ENCODE measurements at regions of chr11 and their contacts with region 1.

Region 1: GRCh38 chr11:121655537-121656327 is 203.0 kb upstream of the SORL1-AS1 start:
- DNase-seq: peak; percentile 86 to 88
- ATAC-seq: peak; percentile 95 to 98 (median 96)
- H3K4me3 ChIP-seq: peak overlapping the region in 9 of 10 donors; percentile 22 to 60 (median 50)
- H3K27ac ChIP-seq: peak overlapping the region; percentile 82 to 96 (median 91)
- H3K4me1 ChIP-seq: peaks cover 0 to 28% (median 20%) of the 10 kb centered on the region in 9 donors
- H3K27me3 ChIP-seq: peaks cover 0 to 8% (median 0%) of the 10 kb centered on the region in 7 donors
- CTCF ChIP-seq: peak; percentile 77 to 91 (median 81)

Region 2: GRCh38 chr11:120151536-120151935 is 1504.2 kb before region 1 on chr11:
- intact Hi-C with region 1: no loop called
- DNase-seq: no peak
- ATAC-seq: no peak
- H3K4me3 ChIP-seq: no peak overlapping the region
- H3K27ac ChIP-seq: no peak overlapping the region
- H3K4me1 ChIP-seq: no peaks in the 10 kb centered on the region
- H3K27me3 ChIP-seq: peaks cover 0 to 60% (median 25%) of the 10 kb centered on the region in 7 donors
- CTCF ChIP-seq: no peak

Region 3: GRCh38 chr11:121722431-121723245 is 66.9 kb after region 1 on chr11:
- intact Hi-C with region 1: loop called in 2 of 10 experiments (anchors 5 kb)
- DNase-seq: peak; percentile 73 to 80
- ATAC-seq: peak; percentile 94 to 98 (median 97)
- H3K4me3 ChIP-seq: peak overlapping the region; percentile 16 to 61 (median 51)
- H3K27ac ChIP-seq: peak overlapping the region; percentile 30 to 90 (median 84)
- H3K4me1 ChIP-seq: peaks cover 0 to 22% (median 16%) of the 10 kb centered on the region in 9 donors
- H3K27me3 ChIP-seq: peaks cover 0 to 24% (median 0%) of the 10 kb centered on the region in 7 donors
- CTCF ChIP-seq: peak in 2 of 9 donors; percentile 30 to 33

Region 4: DNA sequence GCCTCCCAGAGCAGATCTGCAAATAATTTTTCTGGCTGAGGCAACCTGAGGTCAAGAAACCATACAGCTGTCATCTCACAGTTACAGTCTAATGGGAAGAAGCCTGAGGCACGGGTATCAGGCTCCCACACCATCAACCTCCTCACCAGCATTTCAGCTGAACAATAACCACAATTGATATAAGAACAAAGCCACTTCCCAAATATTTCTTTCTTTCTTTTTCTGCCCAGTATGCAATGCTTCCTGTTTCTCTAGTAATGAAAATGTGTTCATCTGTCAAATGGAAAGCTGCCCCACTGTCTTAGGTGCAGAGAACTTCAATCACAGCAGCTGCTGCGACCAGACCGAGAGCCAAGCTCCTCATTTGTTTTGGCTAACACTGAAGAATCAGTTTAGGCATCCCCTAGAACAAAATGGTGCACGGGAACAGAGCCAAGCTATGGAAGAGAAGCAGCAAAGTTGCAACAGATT is 351.9 kb after region 1 on chr11:
- intact Hi-C with region 1: loop called in 2 of 10 experiments (anchors 5 to 10 kb)
- DNase-seq: peak in 1 of 2 donors; percentile 44
- ATAC-seq: peak in 4 of 8 donors; percentile 25 to 72 (median 58)
- H3K4me3 ChIP-seq: no peak overlapping the region
- H3K27ac ChIP-seq: peak overlapping the region in 1 of 10 donors; percentile 37
- H3K4me1 ChIP-seq: peaks cover 0 to 13% (median 0%) of the 10 kb centered on the region in 9 donors
- H3K27me3 ChIP-seq: no peaks in the 10 kb centered on the region
- CTCF ChIP-seq: no peak

Region 5: DNA sequence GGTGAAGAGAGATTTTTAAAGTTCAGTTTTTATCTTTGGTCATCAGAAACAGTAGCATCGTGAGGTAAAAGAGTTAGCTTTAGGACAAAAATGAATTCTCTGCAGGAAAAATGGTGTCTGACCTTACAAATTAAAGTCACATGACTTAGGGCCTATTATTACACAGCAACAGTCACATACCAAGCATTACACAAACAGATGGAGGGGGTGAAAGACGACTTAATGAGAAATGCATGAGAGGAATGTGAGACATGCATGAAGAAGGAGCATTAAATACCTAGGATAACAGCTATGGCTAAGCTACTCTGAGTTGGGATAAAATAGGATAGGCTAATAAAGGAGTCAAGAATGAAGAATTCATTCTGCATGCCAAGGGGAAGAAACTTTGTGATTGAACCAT is 382.8 kb after region 1 on chr11:
- intact Hi-C with region 1: loop called in 1 of 10 experiments (anchors 10 kb)
- DNase-seq: no peak
- ATAC-seq: peak in 1 of 8 donors; percentile 48
- H3K4me3 ChIP-seq: no peak overlapping the region
- H3K27ac ChIP-seq: peak overlapping the region in 2 of 10 donors; percentile 9 to 35
- H3K4me1 ChIP-seq: peaks cover 0 to 22% (median 7%) of the 10 kb centered on the region in 9 donors
- H3K27me3 ChIP-seq: no peaks in the 10 kb centered on the region
- CTCF ChIP-seq: no peak

Region 6: DNA sequence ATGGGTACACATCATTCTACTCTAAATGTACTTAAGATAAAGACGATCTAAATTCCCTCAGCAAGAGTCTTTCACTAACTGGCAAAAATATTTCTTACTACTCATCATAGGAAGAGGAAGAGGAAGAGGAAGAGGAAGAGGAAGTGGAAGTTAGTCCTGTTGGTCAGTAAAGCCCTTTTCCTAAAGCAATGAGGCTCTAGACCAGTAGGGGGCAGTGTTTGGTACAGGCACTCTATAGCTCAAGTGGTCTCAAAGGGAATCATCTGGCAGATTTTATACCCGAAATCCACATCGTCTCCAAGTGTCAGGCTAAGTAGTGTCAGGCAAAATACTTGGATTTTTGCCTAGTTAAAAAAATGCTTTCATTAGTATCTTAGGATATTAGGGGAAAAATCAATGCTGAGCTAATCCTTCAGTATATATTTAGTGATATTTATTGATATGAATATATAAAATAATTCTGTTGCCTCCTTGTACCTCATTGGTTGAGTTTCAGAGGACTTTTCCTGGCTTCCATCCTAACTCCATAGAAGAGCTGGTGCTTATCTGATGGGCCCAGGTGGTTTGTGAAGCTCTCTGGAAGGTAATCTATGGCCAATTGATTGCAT is 452.6 kb after region 1 on chr11:
- intact Hi-C with region 1: loop called in 7 of 10 experiments (anchors 2 to 10 kb)
- DNase-seq: no peak
- ATAC-seq: no peak
- H3K4me3 ChIP-seq: no peak overlapping the region
- H3K27ac ChIP-seq: peak overlapping the region in 9 of 10 donors; percentile 12 to 70 (median 61)
- H3K4me1 ChIP-seq: peaks cover 0 to 30% (median 10%) of the 10 kb centered on the region in 9 donors
- H3K27me3 ChIP-seq: no peaks in the 10 kb centered on the region
- CTCF ChIP-seq: peak; percentile 20 to 57 (median 50)

Region 7: GRCh38 chr11:122215244-122215992 is 559.7 kb after region 1 on chr11:
- intact Hi-C with region 1: loop called in 1 of 10 experiments (anchors 5 kb)
- DNase-seq: peak; percentile 71 to 86
- ATAC-seq: peak; percentile 92 to 96 (median 94)
- H3K4me3 ChIP-seq: no peak overlapping the region
- H3K27ac ChIP-seq: peak overlapping the region in 9 of 10 donors; percentile 2 to 60 (median 11)
- H3K4me1 ChIP-seq: peaks cover 0 to 24% (median 14%) of the 10 kb centered on the region in 9 donors
- H3K27me3 ChIP-seq: no peaks in the 10 kb centered on the region
- CTCF ChIP-seq: peak; percentile 85 to 97 (median 94)

Measured in heart right ventricle (tissue), 16 donors.